ENCODE measurements at regions of chr1 and their contacts with region 1.

Region 1: DNA sequence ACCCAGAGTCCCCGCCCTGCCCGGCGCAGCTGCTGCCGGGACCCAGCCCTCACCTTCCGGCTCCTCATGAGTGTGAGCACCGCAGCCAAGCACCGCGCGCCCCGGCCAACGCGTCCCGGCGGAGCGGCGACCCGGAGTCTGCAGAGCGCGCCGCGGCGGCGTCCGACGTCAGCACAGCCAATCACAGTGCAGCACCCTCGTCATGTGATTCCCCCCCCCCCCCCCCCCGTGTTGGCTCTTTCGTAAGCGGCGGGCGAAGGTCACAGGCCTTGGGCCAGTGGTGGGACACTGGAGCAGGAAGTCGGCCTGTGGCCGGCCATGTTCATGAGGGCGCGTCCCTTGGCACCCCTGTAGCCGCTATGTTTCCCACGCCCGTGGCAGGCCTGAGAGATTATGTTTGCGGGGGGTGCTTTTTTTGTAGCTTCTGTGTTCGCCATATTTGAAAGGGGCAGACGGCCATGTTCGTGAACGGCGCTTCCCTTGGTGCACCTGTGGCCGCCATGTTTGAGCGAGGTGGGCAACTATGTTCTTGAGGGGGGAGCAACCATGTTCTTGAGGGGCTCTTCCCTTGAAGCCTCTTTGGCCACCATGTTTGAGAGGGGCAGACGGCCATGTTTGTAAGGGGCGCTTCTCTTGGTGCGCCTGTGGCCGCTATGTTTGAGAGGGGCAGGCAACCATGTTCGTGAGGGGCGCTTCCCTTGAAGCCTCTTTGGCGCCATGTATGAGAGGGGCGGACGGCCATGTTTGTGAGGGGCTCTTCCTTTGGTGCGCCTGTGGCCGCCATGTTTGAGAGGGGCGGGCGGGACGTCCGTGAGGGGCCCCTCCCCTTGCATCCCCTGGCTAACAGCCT is at the start of gene C1orf174:
- DNase-seq: peak; percentile 96
- ATAC-seq: peak; percentile 81
- H3K4me3 Mint-ChIP-seq: peak within 1 kb of the TSS; percentile 89
- H3K27ac Mint-ChIP-seq: peak within 1 kb of the TSS; percentile 98
- H3K4me1 Mint-ChIP-seq: peaks cover 55% of the 10 kb centered on the region
- H3K27me3 Mint-ChIP-seq: no peaks in the 10 kb centered on the region
- total RNA-seq, gene C1orf174: 30.0 to 35.8 TPM

Region 2: GRCh38 chr1:3856908-3857790 is 43.2 kb before region 1 on chr1 and contains the starts of genes CEP104 and DFFB:
- CTCF ChIA-PET with region 1: interaction called, 20 read pairs
- DNase-seq: peak; percentile 98
- ATAC-seq: peak; percentile 98
- H3K4me3 Mint-ChIP-seq: peak within 1 kb of the TSS; percentile 93
- H3K27ac Mint-ChIP-seq: peak within 1 kb of the TSS; percentile 91
- H3K4me1 Mint-ChIP-seq: peaks cover 29% of the 10 kb centered on the region
- H3K27me3 Mint-ChIP-seq: no peaks in the 10 kb centered on the region
- total RNA-seq, gene CEP104: 45.0 to 52.2 TPM
- total RNA-seq, gene DFFB: 11.5 to 13.9 TPM

Region 3: GRCh38 chr1:3928586-3928985 is 28.2 kb after region 1 on chr1:
- CTCF ChIA-PET with region 1: no interaction called
- DNase-seq: no peak
- ATAC-seq: peak; percentile 44
- H3K4me3 Mint-ChIP-seq: no peak overlapping the region
- H3K27ac Mint-ChIP-seq: no peak overlapping the region
- H3K4me1 Mint-ChIP-seq: peaks cover 4% of the 10 kb centered on the region
- H3K27me3 Mint-ChIP-seq: no peaks in the 10 kb centered on the region

Region 4: DNA sequence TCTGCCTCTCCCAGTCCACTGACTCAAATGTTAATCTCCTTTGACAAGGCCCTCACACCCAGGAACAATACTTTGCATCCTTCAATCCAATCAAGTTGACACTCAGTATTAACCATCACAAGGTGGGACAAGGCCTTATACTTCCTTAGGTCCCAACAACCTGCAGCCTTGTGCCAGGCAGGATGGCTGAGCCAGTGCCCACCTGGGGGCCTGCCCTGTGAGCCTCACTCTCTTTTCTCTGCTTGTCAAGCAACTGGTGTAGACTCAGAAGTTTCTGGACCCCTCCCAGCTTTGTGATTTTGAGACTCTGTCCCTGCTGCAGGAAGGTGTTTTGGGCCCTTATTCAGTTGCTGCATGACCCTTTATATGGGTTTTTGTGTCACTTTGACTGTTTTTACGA is 309.7 kb after region 1 on chr1:
- CTCF ChIA-PET with region 1: no interaction called
- DNase-seq: no peak
- ATAC-seq: no peak
- H3K4me3 Mint-ChIP-seq: no peak overlapping the region
- H3K27ac Mint-ChIP-seq: no peak overlapping the region
- H3K4me1 Mint-ChIP-seq: no peaks in the 10 kb centered on the region
- H3K27me3 Mint-ChIP-seq: no peaks in the 10 kb centered on the region